ENCODE measurements at regions of chr16 and their contacts with region 1.

Region 1: GRCh38 chr16:15597822-15598647 is 44.9 kb downstream of the MARF1 start:
- DNase-seq: no peak
- H3K4me3 ChIP-seq: no peak overlapping the region
- H3K27ac ChIP-seq: no peak overlapping the region
- H3K4me1 ChIP-seq: no peaks in the 10 kb centered on the region
- H3K27me3 ChIP-seq: no peaks in the 10 kb centered on the region
- CTCF ChIP-seq: no peak

Region 2: GRCh38 chr16:15493466-15494150 is 104.4 kb before region 1 on chr16:
- CTCF ChIA-PET with region 1: no interaction called
- dilution Hi-C with region 1: no loop called
- in situ Hi-C with region 1: no loop called
- intact Hi-C with region 1: no loop called
- DNase-seq: no peak
- H3K4me3 ChIP-seq: no peak overlapping the region
- H3K27ac ChIP-seq: no peak overlapping the region
- H3K4me1 ChIP-seq: peaks cover 5% of the 10 kb centered on the region
- H3K27me3 ChIP-seq: no peaks in the 10 kb centered on the region
- CTCF ChIP-seq: no peak

Region 3: GRCh38 chr16:15553313-15554088 is 44.5 kb before region 1 on chr16:
- CTCF ChIA-PET with region 1: no interaction called
- dilution Hi-C with region 1: loop called (anchors 5 kb)
- in situ Hi-C with region 1: no loop called
- intact Hi-C with region 1: no loop called
- DNase-seq: peak; percentile 11
- H3K4me3 ChIP-seq: no peak overlapping the region
- H3K27ac ChIP-seq: no peak overlapping the region
- H3K4me1 ChIP-seq: no peaks in the 10 kb centered on the region
- H3K27me3 ChIP-seq: no peaks in the 10 kb centered on the region
- CTCF ChIP-seq: no peak

Region 4: DNA sequence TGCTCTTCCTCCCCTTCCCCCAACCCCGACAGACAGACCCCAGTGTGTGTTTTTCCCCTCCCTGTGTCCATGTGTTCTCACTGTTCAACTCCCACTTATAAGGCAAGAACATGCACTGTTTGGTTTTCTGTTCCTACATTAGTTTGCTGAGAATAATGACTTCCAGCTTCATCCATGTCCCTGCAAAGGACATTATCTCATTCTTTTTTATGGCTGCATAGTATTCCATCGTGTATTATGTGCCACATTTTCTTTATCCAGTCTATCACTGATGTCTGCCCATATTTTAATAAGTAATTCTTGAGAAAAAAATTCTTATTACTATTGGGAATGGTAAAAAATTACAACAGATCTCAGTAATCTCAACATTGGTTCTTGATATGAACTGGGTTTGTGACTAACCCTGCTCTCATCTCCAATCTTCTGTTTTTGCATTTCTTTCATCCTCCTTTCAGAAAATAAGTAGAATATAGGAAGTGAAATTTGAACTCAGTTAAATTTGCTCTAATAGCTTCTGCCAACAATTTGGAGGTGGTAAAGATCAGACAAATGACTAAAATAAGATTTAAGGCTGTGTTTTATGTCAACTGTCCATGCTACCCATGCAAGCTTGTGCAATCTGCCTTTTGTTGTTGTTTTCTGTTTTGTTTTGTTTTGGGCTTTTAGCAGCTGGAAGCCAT is 33.8 kb after region 1 on chr16:
- CTCF ChIA-PET with region 1: no interaction called
- dilution Hi-C with region 1: loop called (anchors 5 kb)
- in situ Hi-C with region 1: no loop called
- intact Hi-C with region 1: no loop called
- DNase-seq: no peak
- H3K4me3 ChIP-seq: no peak overlapping the region
- H3K27ac ChIP-seq: no peak overlapping the region
- H3K4me1 ChIP-seq: no peaks in the 10 kb centered on the region
- H3K27me3 ChIP-seq: no peaks in the 10 kb centered on the region
- CTCF ChIP-seq: no peak

Measured in mammary epithelial cell (primary cell).